ENCODE measurements at regions of chr2 and their contacts with region 1.

Region 1: GRCh38 chr2:20326163-20326780 is 24.4 kb downstream of the PUM2 start:
- DNase-seq: no peak
- ATAC-seq: peak; percentile 94
- H3K4me3 ChIP-seq: no peak overlapping the region
- H3K27ac ChIP-seq: no peak overlapping the region
- H3K4me1 ChIP-seq: peaks cover 6% of the 10 kb centered on the region; the same call in 1 of the 2 replicates
- H3K27me3 ChIP-seq: no peaks in the 10 kb centered on the region
- CTCF ChIP-seq: peak; percentile 77 to 84 (median 82)
- EP300 ChIP-seq: no peak
- POLR2A ChIP-seq: no peak
- RAD21 ChIP-seq: peak; percentile 64

Region 2: DNA sequence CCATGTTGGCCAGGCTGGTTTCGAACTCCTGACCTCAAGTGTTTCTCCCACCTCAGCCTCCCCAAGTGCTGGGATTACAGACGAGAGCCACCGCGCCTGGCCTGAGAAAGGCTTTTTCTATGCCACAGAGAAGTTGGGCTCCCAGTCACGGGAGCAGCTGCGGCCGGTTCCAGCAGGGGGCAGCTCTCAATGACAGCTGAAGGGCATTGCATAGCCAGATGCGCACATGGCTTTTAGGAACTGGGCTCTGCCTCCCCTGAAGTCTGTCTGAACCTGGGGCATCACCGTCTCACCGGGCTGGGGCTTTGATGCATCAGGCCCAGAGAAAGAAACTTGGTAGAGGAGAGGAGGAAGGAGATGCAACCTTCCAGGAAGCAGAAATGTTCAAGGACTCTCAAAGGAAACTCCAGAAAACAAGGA is 190.6 kb before region 1 on chr2:
- CTCF ChIA-PET with region 1: interaction called, 15 read pairs
- POLR2A ChIA-PET with region 1: no interaction called
- RAD21 ChIA-PET with region 1: no interaction called
- SMC1A ChIA-PET with region 1: interaction called, 6 read pairs
- in situ Hi-C with region 1: no loop called
- intact Hi-C with region 1: no loop called
- DNase-seq: no peak
- ATAC-seq: peak; percentile 98
- H3K4me3 ChIP-seq: no peak overlapping the region
- H3K27ac ChIP-seq: no peak overlapping the region
- H3K4me1 ChIP-seq: peaks cover 2% of the 10 kb centered on the region; the same call in 1 of the 2 replicates
- H3K27me3 ChIP-seq: peaks cover 0 to 3% of the 10 kb centered on the region in 2 experiments; a peak in 2 of 4 replicates
- CTCF ChIP-seq: peak; percentile 87 to 94 (median 88)
- EP300 ChIP-seq: no peak
- POLR2A ChIP-seq: no peak
- RAD21 ChIP-seq: peak; percentile 93

Region 3: DNA sequence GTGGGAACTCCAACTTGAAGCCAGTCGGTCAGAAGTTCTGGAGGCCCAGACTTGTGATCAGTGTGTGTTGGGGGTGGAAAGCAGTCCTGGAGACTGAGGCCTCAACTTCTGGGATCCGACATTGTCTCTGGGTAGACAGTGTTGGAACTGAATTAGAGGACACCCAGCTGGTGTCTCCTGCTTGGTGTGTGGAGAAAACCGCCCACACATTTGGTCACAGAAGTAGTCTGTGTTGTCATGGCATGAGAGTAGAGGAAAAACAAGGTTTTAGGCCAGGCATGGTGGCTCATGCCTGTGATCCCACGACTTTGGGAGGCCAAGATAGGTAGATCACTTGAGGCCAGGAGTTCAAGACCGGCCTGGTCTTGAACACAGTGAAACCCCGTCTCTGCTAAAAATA is 27.2 kb before region 1 on chr2:
- CTCF ChIA-PET with region 1: interaction called, 12 read pairs
- POLR2A ChIA-PET with region 1: interaction called, 4 read pairs
- RAD21 ChIA-PET with region 1: interaction called, 3 read pairs
- SMC1A ChIA-PET with region 1: interaction called, 3 read pairs
- in situ Hi-C with region 1: no loop called
- intact Hi-C with region 1: no loop called
- DNase-seq: no peak
- ATAC-seq: no peak
- H3K4me3 ChIP-seq: no peak overlapping the region
- H3K27ac ChIP-seq: no peak overlapping the region
- H3K4me1 ChIP-seq: no peaks in the 10 kb centered on the region
- H3K27me3 ChIP-seq: no peaks in the 10 kb centered on the region
- CTCF ChIP-seq: no peak
- EP300 ChIP-seq: no peak
- POLR2A ChIP-seq: no peak
- RAD21 ChIP-seq: no peak

Region 4: DNA sequence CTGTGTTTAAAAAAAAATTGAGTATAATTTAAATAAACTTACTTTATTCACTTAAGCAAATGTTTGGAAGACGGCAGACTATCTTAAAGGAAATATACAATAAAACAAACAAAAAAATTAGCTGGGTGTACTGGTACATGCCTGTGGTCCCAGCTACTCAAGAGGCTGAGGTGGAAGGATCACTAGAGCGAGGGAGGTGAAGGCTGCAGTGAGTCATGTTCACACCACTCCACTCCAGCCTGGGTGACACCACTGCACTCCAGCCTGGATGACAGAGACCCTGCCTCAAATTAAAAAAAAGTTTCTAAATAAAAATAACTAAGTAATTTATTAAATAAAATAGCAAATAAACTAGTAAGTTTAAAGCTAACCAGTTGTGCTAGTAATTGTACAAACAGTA is 16.9 kb after region 1 on chr2:
- CTCF ChIA-PET with region 1: interaction called, 94 read pairs
- POLR2A ChIA-PET with region 1: interaction called, 24 read pairs
- RAD21 ChIA-PET with region 1: interaction called, 12 read pairs
- SMC1A ChIA-PET with region 1: interaction called, 48 read pairs
- in situ Hi-C with region 1: no loop called
- intact Hi-C with region 1: loop called (anchors 2 kb)
- DNase-seq: no peak
- ATAC-seq: peak; percentile 57
- H3K4me3 ChIP-seq: no peak overlapping the region
- H3K27ac ChIP-seq: no peak overlapping the region
- H3K4me1 ChIP-seq: no peaks in the 10 kb centered on the region
- H3K27me3 ChIP-seq: no peaks in the 10 kb centered on the region
- CTCF ChIP-seq: no peak
- EP300 ChIP-seq: no peak
- POLR2A ChIP-seq: no peak
- RAD21 ChIP-seq: no peak

Region 5: DNA sequence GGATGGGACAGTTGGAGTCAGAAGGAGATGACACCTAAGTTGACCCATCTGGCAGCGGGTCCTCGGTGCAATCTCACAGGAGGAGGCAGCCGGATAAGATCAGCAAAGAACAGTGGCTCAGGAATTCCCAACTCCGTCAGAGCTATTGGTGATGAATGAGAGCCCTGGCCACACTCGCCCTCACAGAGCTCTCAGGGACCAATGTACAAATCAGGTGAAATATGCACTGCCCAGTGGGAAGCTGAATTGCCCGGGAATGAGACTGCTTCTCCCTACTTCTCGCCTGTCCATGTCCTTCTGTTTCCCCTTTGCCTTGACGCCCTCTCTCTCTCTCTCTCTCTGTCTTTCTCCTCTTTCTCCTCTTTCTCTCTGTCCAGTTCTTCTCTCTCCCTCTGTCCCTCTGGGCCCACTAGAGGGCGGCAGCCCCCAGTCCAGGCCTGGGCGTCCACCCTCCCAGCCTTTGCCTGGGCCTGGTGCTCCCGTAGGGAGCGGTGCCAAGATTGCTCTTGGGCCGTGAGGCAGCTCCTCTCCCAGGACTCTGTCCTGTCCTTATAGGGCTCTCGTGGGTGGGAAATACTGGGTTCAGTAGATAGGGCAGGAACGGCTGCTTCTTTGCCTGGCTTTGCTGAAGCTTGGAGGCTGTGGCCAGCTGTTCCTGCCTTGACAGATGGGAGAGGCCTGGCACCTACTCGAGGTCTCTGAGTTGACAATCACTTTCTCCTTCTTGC is 52.7 kb after region 1 on chr2:
- CTCF ChIA-PET with region 1: interaction called, 8 read pairs
- POLR2A ChIA-PET with region 1: no interaction called
- RAD21 ChIA-PET with region 1: no interaction called
- SMC1A ChIA-PET with region 1: interaction called, 3 read pairs
- in situ Hi-C with region 1: no loop called
- intact Hi-C with region 1: loop called (anchors 2 kb)
- DNase-seq: no peak
- ATAC-seq: peak; percentile 88
- H3K4me3 ChIP-seq: no peak overlapping the region
- H3K27ac ChIP-seq: no peak overlapping the region
- H3K4me1 ChIP-seq: no peaks in the 10 kb centered on the region
- H3K27me3 ChIP-seq: no peaks in the 10 kb centered on the region
- CTCF ChIP-seq: peak; percentile 34 to 50 (median 41); a peak in 5 of 6 replicates
- EP300 ChIP-seq: no peak
- POLR2A ChIP-seq: no peak
- RAD21 ChIP-seq: peak; percentile 55

Region 6: DNA sequence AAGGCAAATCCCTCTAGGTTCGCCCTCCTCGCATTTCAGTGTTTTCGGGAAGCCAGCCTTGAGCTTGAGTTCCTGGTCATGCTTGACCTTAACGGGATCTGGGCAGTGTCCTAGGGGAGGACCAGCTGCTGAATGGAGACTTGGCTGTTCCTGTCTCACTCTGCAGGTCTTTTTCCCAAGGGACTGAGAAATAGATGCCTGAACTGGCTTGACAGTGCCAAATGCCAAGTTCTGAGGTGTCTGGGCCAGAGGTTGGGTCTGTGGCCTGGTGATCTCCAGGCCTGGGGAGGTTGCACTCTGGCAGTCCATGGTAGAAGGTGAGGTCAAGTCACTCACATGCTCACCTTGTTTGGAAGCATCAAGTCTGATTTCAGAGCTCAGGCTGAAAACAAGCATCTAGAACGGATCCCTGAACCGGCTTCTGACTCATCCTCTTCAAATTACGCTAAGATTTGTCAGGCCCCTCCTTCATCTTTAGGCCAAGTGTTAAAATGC is 140.2 kb after region 1 on chr2:
- CTCF ChIA-PET with region 1: no interaction called
- POLR2A ChIA-PET with region 1: no interaction called
- RAD21 ChIA-PET with region 1: no interaction called
- SMC1A ChIA-PET with region 1: no interaction called
- in situ Hi-C with region 1: no loop called
- intact Hi-C with region 1: no loop called
- DNase-seq: no peak
- ATAC-seq: no peak
- H3K4me3 ChIP-seq: no peak overlapping the region
- H3K27ac ChIP-seq: no peak overlapping the region
- H3K4me1 ChIP-seq: no peaks in the 10 kb centered on the region
- H3K27me3 ChIP-seq: no peaks in the 10 kb centered on the region
- CTCF ChIP-seq: no peak
- EP300 ChIP-seq: no peak
- POLR2A ChIP-seq: no peak
- RAD21 ChIP-seq: no peak